WTC11 (cell line): ENCODE measurements at regions of chr3 and their contacts with region 1.

Region 1: DNA sequence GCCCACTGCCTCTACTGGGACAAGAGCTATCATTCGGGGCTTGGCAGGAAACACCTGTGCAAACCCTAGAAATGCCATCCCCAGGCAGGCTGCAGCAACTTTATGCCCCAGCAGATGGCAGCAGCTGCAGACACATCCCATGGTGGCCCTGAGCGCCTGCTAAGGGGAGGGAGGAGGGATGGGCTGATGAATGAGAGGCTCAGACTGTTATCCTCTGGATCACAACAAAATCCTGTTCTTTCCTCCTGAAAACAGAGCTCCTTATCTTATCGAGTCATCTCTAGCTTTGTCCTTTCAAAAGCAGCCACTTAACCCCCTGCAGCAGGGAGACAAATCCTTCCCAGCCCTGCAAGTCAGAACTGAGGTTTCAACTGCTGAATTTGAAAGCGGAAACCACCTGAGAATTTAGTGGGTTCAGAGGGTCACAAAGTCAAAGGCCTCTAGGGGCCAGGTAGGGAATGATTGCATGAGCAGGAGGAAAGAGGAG is 90.6 kb upstream of the PROK2 start:
- DNase-seq: peak; percentile 93
- ATAC-seq: peak; percentile 86
- H3K4me3 Mint-ChIP-seq: no peak overlapping the region
- H3K27ac Mint-ChIP-seq: peak overlapping the region; percentile 96
- H3K4me1 Mint-ChIP-seq: peaks cover 66% of the 10 kb centered on the region
- H3K27me3 Mint-ChIP-seq: no peaks in the 10 kb centered on the region; the same call in 1 of the 2 replicates
- CTCF ChIP-seq: peak; percentile 72

Region 2: GRCh38 chr3:71710906-71711494 is 164.5 kb before region 1 on chr3:
- CTCF ChIA-PET with region 1: interaction called, 24 read pairs
- POLR2A ChIA-PET with region 1: no interaction called
- DNase-seq: no peak
- ATAC-seq: peak; percentile 84
- H3K4me3 Mint-ChIP-seq: no peak overlapping the region
- H3K27ac Mint-ChIP-seq: no peak overlapping the region
- H3K4me1 Mint-ChIP-seq: peaks cover 3% of the 10 kb centered on the region; the same call in 1 of the 2 replicates
- H3K27me3 Mint-ChIP-seq: no peaks in the 10 kb centered on the region; the same call in 1 of the 2 replicates
- CTCF ChIP-seq: peak; percentile 42

Region 3: GRCh38 chr3:71753630-71754483 is 121.6 kb before region 1 on chr3 and contains the start of gene GPR27:
- CTCF ChIA-PET with region 1: no interaction called
- POLR2A ChIA-PET with region 1: no interaction called
- DNase-seq: peak; percentile 45
- ATAC-seq: peak; percentile 53
- H3K4me3 Mint-ChIP-seq: peak within 1 kb of the TSS; percentile 74
- H3K27ac Mint-ChIP-seq: no peak within 1 kb of the TSS
- H3K4me1 Mint-ChIP-seq: peaks cover 19% of the 10 kb centered on the region
- H3K27me3 Mint-ChIP-seq: peaks cover 47% of the 10 kb centered on the region
- CTCF ChIP-seq: no peak
- total RNA-seq, gene GPR27: 14.7 to 16.4 TPM (median 14.8 TPM) in 3 replicates

Region 4: GRCh38 chr3:71859123-71859519 is 16.4 kb before region 1 on chr3:
- CTCF ChIA-PET with region 1: interaction called, 17 read pairs
- POLR2A ChIA-PET with region 1: interaction called, 3 read pairs
- DNase-seq: no peak
- ATAC-seq: peak; percentile 74
- H3K4me3 Mint-ChIP-seq: no peak overlapping the region
- H3K27ac Mint-ChIP-seq: no peak overlapping the region
- H3K4me1 Mint-ChIP-seq: peaks cover 30% of the 10 kb centered on the region
- H3K27me3 Mint-ChIP-seq: no peaks in the 10 kb centered on the region; the same call in 1 of the 2 replicates
- CTCF ChIP-seq: peak; percentile 40; the same call in 1 of the 2 replicates

Region 5: GRCh38 chr3:71903112-71903495 is 27.6 kb after region 1 on chr3:
- CTCF ChIA-PET with region 1: interaction called, 23 read pairs
- POLR2A ChIA-PET with region 1: no interaction called
- DNase-seq: no peak
- ATAC-seq: no peak
- H3K4me3 Mint-ChIP-seq: no peak overlapping the region
- H3K27ac Mint-ChIP-seq: no peak overlapping the region
- H3K4me1 Mint-ChIP-seq: peaks cover 25% of the 10 kb centered on the region
- H3K27me3 Mint-ChIP-seq: no peaks in the 10 kb centered on the region; the same call in 1 of the 2 replicates
- CTCF ChIP-seq: no peak

Region 6: GRCh38 chr3:71926262-71926600 is 50.7 kb after region 1 on chr3:
- CTCF ChIA-PET with region 1: interaction called, 27 read pairs
- POLR2A ChIA-PET with region 1: no interaction called
- DNase-seq: peak; percentile 70
- ATAC-seq: peak; percentile 78
- H3K4me3 Mint-ChIP-seq: peak overlapping the region; percentile 52
- H3K27ac Mint-ChIP-seq: peak overlapping the region; percentile 93
- H3K4me1 Mint-ChIP-seq: peaks cover 61% of the 10 kb centered on the region
- H3K27me3 Mint-ChIP-seq: no peaks in the 10 kb centered on the region; the same call in 1 of the 2 replicates
- CTCF ChIP-seq: peak; percentile 46; the same call in 1 of the 2 replicates

Region 7: GRCh38 chr3:71955240-71956068 is 80.0 kb after region 1 on chr3:
- CTCF ChIA-PET with region 1: interaction called, 29 read pairs
- POLR2A ChIA-PET with region 1: no interaction called
- DNase-seq: peak; percentile 64
- ATAC-seq: peak; percentile 78
- H3K4me3 Mint-ChIP-seq: no peak overlapping the region
- H3K27ac Mint-ChIP-seq: no peak overlapping the region; the same call in 1 of the 2 replicates
- H3K4me1 Mint-ChIP-seq: peaks cover 40% of the 10 kb centered on the region
- H3K27me3 Mint-ChIP-seq: no peaks in the 10 kb centered on the region
- CTCF ChIP-seq: peak; percentile 23; the same call in 1 of the 2 replicates

Region 8: DNA sequence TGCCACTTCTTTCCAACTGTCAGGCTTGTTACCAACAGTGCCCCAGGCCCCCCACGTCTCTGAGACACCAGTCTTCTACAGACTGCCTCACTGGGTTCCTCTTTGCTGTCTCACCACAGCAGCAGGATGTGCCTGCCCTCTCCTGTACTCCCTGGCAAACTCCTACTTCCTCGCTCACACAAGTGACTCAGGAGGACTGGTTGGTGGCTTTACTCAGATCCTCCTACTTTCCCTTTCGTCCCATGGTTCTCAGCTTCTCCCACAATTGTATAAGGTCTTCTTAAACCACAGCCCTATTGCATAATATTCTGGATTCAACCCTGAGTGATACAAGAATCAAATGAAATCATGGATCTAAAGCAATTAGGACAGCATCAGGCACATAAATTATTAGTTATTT is 156.1 kb after region 1 on chr3:
- CTCF ChIA-PET with region 1: no interaction called
- POLR2A ChIA-PET with region 1: no interaction called
- DNase-seq: no peak
- ATAC-seq: no peak
- H3K4me3 Mint-ChIP-seq: no peak overlapping the region
- H3K27ac Mint-ChIP-seq: peak overlapping the region; percentile 74; the same call in 1 of the 2 replicates
- H3K4me1 Mint-ChIP-seq: peaks cover 38% of the 10 kb centered on the region
- H3K27me3 Mint-ChIP-seq: no peaks in the 10 kb centered on the region; the same call in 1 of the 2 replicates
- CTCF ChIP-seq: no peak

Region 9: DNA sequence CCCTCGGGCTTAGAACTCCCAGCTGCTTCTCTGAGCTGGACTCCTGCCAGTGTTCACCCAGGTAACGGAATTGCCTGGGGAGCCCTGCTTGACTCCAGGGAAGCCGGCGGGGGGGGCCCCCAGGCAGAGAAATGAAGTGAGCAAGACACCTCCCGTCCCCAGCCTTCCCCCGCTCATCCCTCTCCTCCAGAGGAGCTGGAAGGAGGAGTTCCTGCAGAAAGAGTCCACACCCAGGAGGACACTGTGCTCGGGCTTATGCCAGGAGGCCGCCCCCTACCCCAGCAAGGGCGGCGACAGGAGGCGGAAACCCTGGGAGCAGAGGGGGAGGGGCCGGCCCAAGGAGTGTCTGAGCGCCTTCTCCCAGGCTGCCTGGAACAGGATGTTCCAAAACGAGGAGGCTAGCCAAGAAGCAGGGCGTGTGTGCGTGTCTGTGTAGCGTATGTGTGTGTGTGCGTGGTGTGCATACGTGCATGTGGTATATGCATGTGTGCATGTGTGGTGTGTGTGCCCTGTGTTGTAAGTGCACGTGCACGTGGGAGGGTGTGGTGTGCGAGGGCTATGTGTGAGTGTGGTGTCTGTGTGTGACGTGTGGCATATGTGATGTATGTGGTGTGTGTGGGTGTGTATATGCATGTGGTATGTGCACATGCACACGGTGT is 461.4 kb after region 1 on chr3:
- CTCF ChIA-PET with region 1: interaction called, 10 read pairs
- POLR2A ChIA-PET with region 1: no interaction called
- DNase-seq: peak; percentile 58
- ATAC-seq: peak; percentile 64
- H3K4me3 Mint-ChIP-seq: no peak overlapping the region
- H3K27ac Mint-ChIP-seq: no peak overlapping the region
- H3K4me1 Mint-ChIP-seq: peaks cover 14% of the 10 kb centered on the region
- H3K27me3 Mint-ChIP-seq: no peaks in the 10 kb centered on the region
- CTCF ChIP-seq: no peak